GM12878 (cell line): ENCODE measurements at regions of chr6 and their contacts with region 1.

Region 1: DNA sequence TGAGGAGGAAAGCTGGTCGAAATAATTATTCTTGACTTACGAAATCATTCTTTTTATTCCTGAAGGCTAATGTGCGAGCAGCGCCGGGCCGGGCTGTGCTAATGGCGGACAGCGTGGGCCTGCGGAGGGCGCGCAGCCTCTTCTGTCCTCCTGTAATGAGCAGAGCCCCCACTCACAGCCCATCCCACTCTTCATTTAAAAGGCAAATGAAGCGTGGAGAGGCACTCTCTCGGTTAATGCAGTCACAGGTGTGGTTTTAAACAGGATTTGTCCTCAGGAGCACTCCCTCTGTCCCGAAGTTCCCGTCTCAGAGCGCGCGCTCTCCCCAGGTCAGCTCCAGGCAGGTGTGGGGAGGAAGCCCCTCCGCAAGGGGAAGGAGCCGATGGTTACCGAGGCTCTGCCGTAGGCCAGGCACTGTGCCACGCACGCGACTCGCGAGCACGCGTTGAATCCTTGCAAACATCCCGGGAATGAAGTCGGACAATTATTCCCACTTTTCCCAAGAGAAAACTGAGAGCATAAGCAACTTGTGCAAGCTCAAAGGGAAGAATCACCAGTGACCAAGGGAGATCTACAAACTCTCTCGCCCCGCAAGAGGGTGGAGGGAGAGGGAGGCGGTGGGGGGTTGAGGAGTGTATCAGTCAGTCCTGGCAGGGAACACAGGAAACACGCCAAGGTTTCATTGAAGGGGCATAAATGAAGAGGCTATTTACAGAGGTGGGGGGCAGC is 35.5 kb upstream of the ZFAND3 start:
- DNase-seq: no peak
- ATAC-seq: peak; percentile 70
- H3K4me3 ChIP-seq: peak overlapping the region; percentile 58
- H3K27ac ChIP-seq: no peak overlapping the region
- H3K4me1 ChIP-seq: peaks cover 21% of the 10 kb centered on the region
- H3K27me3 ChIP-seq: no peaks in the 10 kb centered on the region; a peak in 1 of 4 replicates
- CTCF ChIP-seq: peak in 1 of 3 experiments; percentile 12; a peak in 1 of 6 replicates
- EP300 ChIP-seq: no peak
- POLR2A ChIP-seq: peak; percentile 66
- RAD21 ChIP-seq: no peak

Region 2: GRCh38 chr6:37705239-37706051 is 78.6 kb before region 1 on chr6:
- CTCF ChIA-PET with region 1: interaction called, 7 read pairs
- POLR2A ChIA-PET with region 1: interaction called, 12 read pairs
- RAD21 ChIA-PET with region 1: interaction called, 6 read pairs
- SMC1A ChIA-PET with region 1: interaction called, 4 read pairs
- in situ Hi-C with region 1: no loop called
- intact Hi-C with region 1: no loop called
- DNase-seq: peak; percentile 30
- ATAC-seq: peak; percentile 94
- H3K4me3 ChIP-seq: peak overlapping the region; percentile 38
- H3K27ac ChIP-seq: no peak overlapping the region; the same call in 1 of the 2 replicates
- H3K4me1 ChIP-seq: peaks cover 5% of the 10 kb centered on the region
- H3K27me3 ChIP-seq: peaks cover 0 to 3% of the 10 kb centered on the region in 2 experiments; a peak in 1 of 4 replicates
- CTCF ChIP-seq: peak; percentile 73 to 77 (median 75)
- EP300 ChIP-seq: no peak
- POLR2A ChIP-seq: peak; percentile 40
- RAD21 ChIP-seq: peak; percentile 64

Region 3: DNA sequence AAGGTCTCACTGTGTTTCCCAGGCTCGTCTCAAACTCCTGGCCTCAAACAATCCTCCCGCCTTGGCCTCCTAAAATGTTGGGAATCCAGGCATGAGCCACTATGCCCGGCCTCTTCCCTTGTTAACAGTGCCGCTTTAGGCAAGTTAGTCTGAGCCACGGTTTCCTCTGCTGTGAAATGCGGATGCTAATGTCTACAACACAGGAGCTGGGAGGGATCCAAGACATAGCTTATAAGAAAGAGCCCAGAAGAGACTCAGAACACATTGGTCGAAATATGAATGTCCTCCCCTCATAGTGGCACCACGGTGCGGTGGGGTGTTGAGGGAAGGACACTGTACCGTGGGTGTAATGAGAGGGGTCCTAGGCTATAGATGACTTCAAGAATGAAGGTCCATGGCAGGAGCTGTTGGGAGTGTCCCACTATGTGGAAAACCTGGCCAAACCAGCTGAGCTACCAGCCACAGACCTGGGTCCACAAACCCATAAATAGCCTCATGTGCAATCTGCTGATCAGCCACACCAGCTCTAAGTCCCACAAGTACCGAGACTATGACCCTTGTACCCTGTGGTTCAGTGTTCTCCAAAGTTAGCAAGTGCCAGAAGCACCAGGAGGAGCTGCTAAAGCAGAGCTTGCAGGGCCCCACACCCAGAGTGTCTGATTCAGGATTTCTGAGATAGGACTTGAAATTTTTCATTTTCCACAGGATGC is 22.3 kb before region 1 on chr6:
- CTCF ChIA-PET with region 1: interaction called, 5 read pairs
- POLR2A ChIA-PET with region 1: interaction called, 6 read pairs
- RAD21 ChIA-PET with region 1: interaction called, 16 read pairs
- SMC1A ChIA-PET with region 1: interaction called, 6 read pairs
- in situ Hi-C with region 1: no loop called
- intact Hi-C with region 1: no loop called
- DNase-seq: no peak
- ATAC-seq: peak; percentile 81
- H3K4me3 ChIP-seq: no peak overlapping the region
- H3K27ac ChIP-seq: no peak overlapping the region
- H3K4me1 ChIP-seq: no peaks in the 10 kb centered on the region
- H3K27me3 ChIP-seq: no peaks in the 10 kb centered on the region
- CTCF ChIP-seq: no peak
- EP300 ChIP-seq: no peak; a peak in 1 of 4 replicates
- POLR2A ChIP-seq: no peak
- RAD21 ChIP-seq: no peak

Region 4: GRCh38 chr6:37799263-37799644 is 15.2 kb after region 1 on chr6:
- CTCF ChIA-PET with region 1: no interaction called
- POLR2A ChIA-PET with region 1: no interaction called
- RAD21 ChIA-PET with region 1: no interaction called
- SMC1A ChIA-PET with region 1: no interaction called
- in situ Hi-C with region 1: no loop called
- intact Hi-C with region 1: no loop called
- DNase-seq: no peak
- ATAC-seq: no peak
- H3K4me3 ChIP-seq: no peak overlapping the region
- H3K27ac ChIP-seq: no peak overlapping the region
- H3K4me1 ChIP-seq: no peaks in the 10 kb centered on the region
- H3K27me3 ChIP-seq: no peaks in the 10 kb centered on the region; a peak in 1 of 4 replicates
- CTCF ChIP-seq: no peak
- EP300 ChIP-seq: no peak
- POLR2A ChIP-seq: no peak
- RAD21 ChIP-seq: no peak

Region 5: GRCh38 chr6:38012573-38012972 is 228.6 kb after region 1 on chr6:
- CTCF ChIA-PET with region 1: interaction called, 10 read pairs
- POLR2A ChIA-PET with region 1: no interaction called
- RAD21 ChIA-PET with region 1: no interaction called
- SMC1A ChIA-PET with region 1: interaction called, 4 read pairs
- in situ Hi-C with region 1: no loop called
- intact Hi-C with region 1: no loop called
- DNase-seq: no peak
- ATAC-seq: peak; percentile 94
- H3K4me3 ChIP-seq: no peak overlapping the region
- H3K27ac ChIP-seq: no peak overlapping the region
- H3K4me1 ChIP-seq: no peaks in the 10 kb centered on the region
- H3K27me3 ChIP-seq: no peaks in the 10 kb centered on the region
- CTCF ChIP-seq: peak; percentile 72 to 85 (median 76)
- EP300 ChIP-seq: no peak
- POLR2A ChIP-seq: no peak
- RAD21 ChIP-seq: peak; percentile 90